Activated CD4-positive, alpha-beta memory T cell treated with anti-CD3 and anti-CD28 coated beads for 36 hours (primary cell): ENCODE measurements at regions of chr19 and their contacts with region 1.

Region 1: DNA sequence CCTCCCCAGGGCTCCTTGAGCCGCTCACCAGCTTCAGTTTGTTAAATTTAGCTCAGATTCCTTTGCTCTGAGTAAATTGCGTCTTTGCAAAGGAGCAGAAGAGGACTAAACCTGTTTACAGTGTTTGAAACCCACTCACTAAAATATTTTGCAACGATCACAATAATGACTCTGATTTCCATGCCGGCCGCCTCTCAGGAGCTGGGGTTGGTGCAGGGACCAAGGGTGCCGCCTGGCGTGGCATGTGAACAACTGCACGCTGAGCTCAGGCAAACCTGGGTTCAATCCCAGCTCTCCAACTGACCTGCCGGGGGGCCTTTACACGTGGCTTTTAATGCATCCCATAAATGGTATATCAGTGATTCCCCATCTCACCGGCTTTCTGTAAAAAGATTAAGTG is 68.7 kb upstream of the CACNA1A start:
- DNase-seq: no peak
- H3K4me3 Mint-ChIP-seq: no peak overlapping the region
- H3K27ac Mint-ChIP-seq: no peak overlapping the region
- H3K4me1 Mint-ChIP-seq: no peaks in the 10 kb centered on the region
- H3K27me3 Mint-ChIP-seq: peaks cover 14% of the 10 kb centered on the region

Region 2: DNA sequence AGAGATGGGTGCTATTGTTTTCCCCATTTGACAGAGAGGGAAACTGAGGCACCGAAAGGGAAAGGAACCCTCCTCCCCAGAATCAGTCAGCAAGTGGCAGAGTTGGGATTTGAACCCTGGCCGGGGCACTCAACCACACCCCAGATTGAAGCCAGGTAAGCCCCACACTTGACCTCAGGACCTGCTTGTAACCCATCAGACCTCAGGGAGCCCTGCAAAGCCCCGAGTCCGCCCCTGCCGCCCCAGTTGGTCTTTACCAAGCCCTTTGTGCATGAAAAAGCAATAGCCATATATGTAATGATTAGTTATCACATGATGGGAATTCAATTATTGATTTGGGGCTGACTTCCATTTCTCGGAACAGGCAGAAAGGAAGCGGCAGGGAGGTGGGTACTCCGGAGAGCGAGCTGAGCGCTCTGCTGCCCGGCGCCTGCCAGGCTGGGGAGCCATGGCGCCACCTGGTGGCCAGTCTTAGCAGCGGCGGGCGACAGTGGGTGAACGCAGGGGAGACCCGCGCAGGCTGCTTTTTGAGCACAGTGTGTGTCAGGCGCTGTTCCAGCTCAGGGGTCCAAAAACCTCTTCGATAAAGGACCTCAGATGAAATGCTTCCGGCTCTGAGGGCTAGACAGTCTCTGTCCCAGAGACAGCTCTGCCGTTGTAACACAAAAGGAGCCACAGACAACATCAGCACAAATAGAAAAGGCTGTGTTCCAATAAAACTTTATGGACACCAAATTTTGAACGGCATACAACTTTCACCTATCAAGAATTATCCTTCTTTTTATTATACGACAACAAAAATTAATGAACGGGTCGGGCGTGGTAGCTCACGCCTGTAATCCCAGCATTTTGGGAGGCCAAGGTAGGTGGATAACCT is 14.3 kb after region 1 on chr19:
- CTCF ChIA-PET with region 1: interaction called, 25 read pairs
- POLR2A ChIA-PET with region 1: no interaction called
- intact Hi-C with region 1: no loop called
- DNase-seq: peak; percentile 87
- H3K4me3 Mint-ChIP-seq: no peak overlapping the region
- H3K27ac Mint-ChIP-seq: no peak overlapping the region
- H3K4me1 Mint-ChIP-seq: no peaks in the 10 kb centered on the region
- H3K27me3 Mint-ChIP-seq: peaks cover 8% of the 10 kb centered on the region